ENCODE measurements at regions of chrX and their contacts with region 1.

Region 1: GRCh38 chrX:120617996-120618630 is 11.7 kb downstream of the C1GALT1C1 start:
- DNase-seq: no peak
- H3K4me3 ChIP-seq: no peak overlapping the region
- H3K27ac ChIP-seq: no peak overlapping the region
- H3K4me1 ChIP-seq: no peaks in the 10 kb centered on the region
- H3K27me3 ChIP-seq: no peaks in the 10 kb centered on the region
- CTCF ChIP-seq: no peak

Region 2: GRCh38 chrX:120090208-120090607 is 527.9 kb before region 1 on chrX:
- CTCF ChIA-PET with region 1: no interaction called
- POLR2A ChIA-PET with region 1: no interaction called
- intact Hi-C with region 1: no loop called
- DNase-seq: no peak
- H3K4me3 ChIP-seq: no peak overlapping the region
- H3K27ac ChIP-seq: no peak overlapping the region
- H3K4me1 ChIP-seq: no peaks in the 10 kb centered on the region
- H3K27me3 ChIP-seq: no peaks in the 10 kb centered on the region
- CTCF ChIP-seq: 0 out of 2 replicates have a peak, but pooled peaks have one; percentile 30

Region 3: DNA sequence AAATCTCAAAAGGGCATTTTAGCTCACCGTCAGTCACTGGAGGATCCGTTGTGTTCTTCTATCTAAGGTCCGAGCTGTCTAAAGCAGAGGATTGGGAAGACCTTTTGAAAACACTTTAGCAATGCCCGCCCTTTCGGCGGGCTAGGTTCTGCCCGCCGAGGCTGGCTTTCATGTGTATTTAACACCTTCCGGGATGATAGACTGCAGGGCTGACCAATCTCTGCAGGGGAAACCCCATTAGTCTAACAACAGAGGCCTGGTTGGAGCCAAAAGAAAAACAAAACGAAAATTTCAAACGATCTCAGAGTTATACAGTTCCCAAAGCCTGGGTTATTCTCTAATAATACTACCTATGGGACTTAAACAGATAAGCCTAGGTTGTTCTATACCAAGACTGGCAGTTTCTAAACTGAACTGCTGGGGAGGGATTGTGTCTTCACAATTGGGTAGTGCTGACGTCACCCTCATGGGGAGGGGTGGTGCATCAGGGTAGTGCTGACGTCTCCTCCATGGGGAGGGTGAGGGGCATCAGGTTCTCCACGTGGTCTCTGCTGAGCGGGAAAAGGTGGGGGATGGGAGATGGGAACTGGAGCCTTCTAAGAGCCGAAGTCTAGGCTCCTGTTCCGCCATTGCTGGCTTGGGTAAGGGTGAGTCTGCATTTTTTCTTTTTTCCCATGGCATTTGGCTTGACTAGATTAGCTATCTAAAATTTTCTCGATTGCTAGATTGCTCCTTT is 42.6 kb before region 1 on chrX:
- CTCF ChIA-PET with region 1: interaction called, 10 read pairs
- POLR2A ChIA-PET with region 1: no interaction called
- intact Hi-C with region 1: no loop called
- DNase-seq: no peak
- H3K4me3 ChIP-seq: no peak overlapping the region
- H3K27ac ChIP-seq: no peak overlapping the region
- H3K4me1 ChIP-seq: no peaks in the 10 kb centered on the region
- H3K27me3 ChIP-seq: no peaks in the 10 kb centered on the region
- CTCF ChIP-seq: no peak

Region 4: DNA sequence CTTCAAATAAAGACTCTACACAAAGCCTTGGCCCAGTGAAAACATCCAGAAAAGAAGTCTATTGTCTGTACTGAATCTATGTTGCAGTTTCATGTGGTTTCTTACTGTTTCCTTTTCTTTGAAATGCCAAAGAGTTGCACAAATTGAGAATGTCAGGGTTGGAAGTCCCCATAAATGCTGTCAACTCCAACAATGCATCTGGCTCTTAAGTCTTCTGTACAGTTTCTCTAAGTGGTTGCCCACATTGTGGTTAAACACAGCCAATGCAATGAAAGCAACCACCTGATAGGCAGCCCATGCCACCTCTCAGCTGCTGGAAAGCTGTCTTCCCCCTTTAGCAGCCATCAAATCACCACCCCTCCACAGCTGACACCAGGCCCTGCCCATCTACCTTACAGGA is 78.9 kb after region 1 on chrX:
- CTCF ChIA-PET with region 1: no interaction called
- POLR2A ChIA-PET with region 1: no interaction called
- intact Hi-C with region 1: no loop called
- DNase-seq: no peak
- H3K4me3 ChIP-seq: no peak overlapping the region
- H3K27ac ChIP-seq: no peak overlapping the region
- H3K4me1 ChIP-seq: no peaks in the 10 kb centered on the region
- H3K27me3 ChIP-seq: no peaks in the 10 kb centered on the region
- CTCF ChIP-seq: no peak

Measured in A673 (cell line).